Heart left ventricle (tissue), 16 donors: ENCODE measurements at regions of chr1 and their contacts with region 1.

Region 1: GRCh38 chr1:152061952-152062351 is 25.1 kb upstream of the S100A11 start:
- DNase-seq: no peak
- ATAC-seq: no peak
- H3K4me3 ChIP-seq: no peak overlapping the region
- H3K27ac ChIP-seq: no peak overlapping the region
- H3K4me1 ChIP-seq: no peaks in the 10 kb centered on the region
- H3K27me3 ChIP-seq: peaks cover 0 to 46% (median 7%) of the 10 kb centered on the region in 9 donors
- CTCF ChIP-seq: no peak
- POLR2A ChIP-seq: no peak

Region 2: DNA sequence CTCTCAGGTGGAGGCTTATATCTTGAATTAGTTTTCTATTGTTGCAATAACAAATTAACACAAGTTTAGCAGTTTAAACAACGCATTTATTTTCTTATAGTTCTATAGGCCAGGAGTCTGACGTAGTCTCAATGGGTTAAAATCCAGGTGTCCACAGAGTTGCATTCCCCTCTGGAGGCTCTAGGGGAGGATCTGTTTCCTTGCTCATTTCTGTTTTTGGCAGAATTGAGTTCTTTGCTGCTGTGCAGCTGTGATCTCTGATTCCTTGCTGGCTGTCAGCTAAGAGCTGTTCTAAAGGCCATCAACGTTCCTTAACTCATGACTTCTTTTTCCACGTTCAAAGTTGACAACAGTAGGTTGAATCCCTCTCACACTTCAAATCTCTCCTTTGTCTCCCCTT is 100.1 kb before region 1 on chr1:
- intact Hi-C with region 1: no loop called
- DNase-seq: no peak
- ATAC-seq: peak in 1 of 4 donors; percentile 37
- H3K4me3 ChIP-seq: no peak overlapping the region
- H3K27ac ChIP-seq: peak overlapping the region in 1 of 12 donors; percentile 49
- H3K4me1 ChIP-seq: peaks cover 0 to 26% (median 17%) of the 10 kb centered on the region in 12 donors
- H3K27me3 ChIP-seq: no peaks in the 10 kb centered on the region
- CTCF ChIP-seq: no peak
- POLR2A ChIP-seq: no peak

Region 3: DNA sequence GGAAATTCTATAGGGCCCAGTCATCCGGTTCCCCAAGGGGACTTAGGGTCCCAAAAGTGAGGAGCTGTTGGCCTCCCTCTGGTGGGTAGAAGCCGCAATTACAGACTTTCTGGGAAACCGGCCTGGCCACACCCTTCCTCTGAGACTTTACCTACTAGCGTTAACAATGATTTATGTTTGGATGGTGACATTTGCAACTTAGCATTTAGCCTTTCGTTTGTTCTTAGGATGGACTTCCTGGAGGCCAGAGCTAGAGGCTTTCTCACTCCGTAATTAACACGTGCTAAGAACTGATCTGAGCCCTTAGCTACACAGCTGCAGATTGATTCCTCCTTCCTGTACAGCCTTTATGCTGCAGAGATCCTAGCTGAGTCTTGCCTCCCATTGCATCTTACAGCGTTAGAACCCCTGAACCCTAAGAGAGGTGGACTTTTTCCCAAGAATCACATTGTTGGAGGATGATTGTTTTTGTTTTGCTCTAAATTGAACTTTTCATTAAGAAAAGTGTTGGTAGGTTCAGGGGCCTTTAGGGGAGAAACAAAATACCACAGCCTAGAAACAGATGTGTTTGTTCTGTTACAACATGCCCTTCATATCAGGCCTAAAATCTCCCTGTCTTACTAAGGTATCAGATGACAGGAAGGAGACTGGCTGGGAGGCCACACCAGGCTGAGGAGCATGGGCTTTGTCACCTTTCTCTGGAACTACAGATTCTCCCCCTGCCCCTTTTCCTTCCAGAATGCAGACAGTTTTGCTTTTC is 27.1 kb before region 1 on chr1:
- intact Hi-C with region 1: no loop called
- DNase-seq: peak in 3 of 5 donors; percentile 40 to 52 (median 42)
- ATAC-seq: peak in 3 of 4 donors; percentile 18 to 41 (median 28)
- H3K4me3 ChIP-seq: peak overlapping the region; percentile 44 to 93 (median 69)
- H3K27ac ChIP-seq: peak overlapping the region in 11 of 12 donors; percentile 85 to 98 (median 94)
- H3K4me1 ChIP-seq: peaks cover 0 to 69% (median 16%) of the 10 kb centered on the region in 12 donors
- H3K27me3 ChIP-seq: no peaks in the 10 kb centered on the region
- CTCF ChIP-seq: peak; percentile 54 to 76 (median 64)
- POLR2A ChIP-seq: no peak

Region 4: GRCh38 chr1:152451254-152451653 is 389.3 kb after region 1 on chr1:
- intact Hi-C with region 1: loop called in 2 of 10 experiments (anchors 5 kb)
- DNase-seq: no peak
- ATAC-seq: no peak
- H3K4me3 ChIP-seq: no peak overlapping the region
- H3K27ac ChIP-seq: no peak overlapping the region
- H3K4me1 ChIP-seq: no peaks in the 10 kb centered on the region
- H3K27me3 ChIP-seq: peaks cover 0 to 4% (median 0%) of the 10 kb centered on the region in 9 donors
- CTCF ChIP-seq: peak in 2 of 12 donors; percentile 4 to 8
- POLR2A ChIP-seq: no peak